Heart left ventricle (tissue), 16 donors: ENCODE measurements at regions of chr13 and their contacts with region 1.

Region 1: GRCh38 chr13:45340422-45340925 is 509 bp downstream of the TPT1 start:
- DNase-seq: peak; percentile 93 to 96 (median 94)
- ATAC-seq: peak; percentile 49 to 76 (median 70)
- H3K4me3 ChIP-seq: peak overlapping the region; percentile 71 to 100 (median 94)
- H3K27ac ChIP-seq: peak overlapping the region; percentile 99 to 100 (median 100)
- H3K4me1 ChIP-seq: peaks cover 16 to 57% (median 49%) of the 10 kb centered on the region in 12 donors
- H3K27me3 ChIP-seq: no peaks in the 10 kb centered on the region
- CTCF ChIP-seq: peak; percentile 27 to 77 (median 58)
- POLR2A ChIP-seq: peak in 1 of 2 donors; percentile 6

Region 2: DNA sequence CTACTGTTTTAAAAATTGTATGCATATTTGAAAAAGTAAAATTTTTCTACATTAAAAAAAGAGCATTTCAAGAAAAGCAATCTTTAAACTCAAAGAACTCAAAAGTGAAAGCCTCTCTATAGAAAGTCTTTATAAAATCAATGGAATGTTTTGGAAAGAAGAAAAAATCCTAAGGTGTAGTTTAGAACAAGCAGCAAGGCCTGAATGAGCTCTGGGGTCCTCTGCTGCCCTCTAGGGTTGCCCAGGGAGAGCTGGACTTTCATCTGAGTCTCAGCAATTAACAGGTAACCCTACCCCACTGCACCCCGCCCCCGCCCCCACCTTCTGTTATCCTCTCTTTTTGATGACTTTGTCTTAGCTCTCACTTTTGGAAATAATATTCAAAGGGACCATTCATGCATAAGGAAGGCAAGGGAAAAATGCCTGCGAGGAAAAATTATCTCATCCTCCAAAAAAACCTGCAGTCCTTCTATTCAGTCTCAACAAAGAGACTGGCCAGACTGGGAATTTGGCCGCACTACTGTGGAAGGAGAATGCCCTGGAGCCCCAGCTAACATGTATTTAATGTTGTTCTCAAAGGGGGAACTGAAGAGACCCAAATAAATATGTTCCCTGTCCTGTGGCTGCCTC is 53.6 kb after region 1 on chr13:
- intact Hi-C with region 1: loop called in 1 of 10 experiments (anchors 10 kb)
- DNase-seq: peak in 3 of 5 donors; percentile 43 to 53 (median 45)
- ATAC-seq: peak in 3 of 4 donors; percentile 43 to 61 (median 53)
- H3K4me3 ChIP-seq: no peak overlapping the region
- H3K27ac ChIP-seq: peak overlapping the region in 1 of 12 donors; percentile 2
- H3K4me1 ChIP-seq: peaks cover 0 to 39% (median 18%) of the 10 kb centered on the region in 12 donors
- H3K27me3 ChIP-seq: no peaks in the 10 kb centered on the region
- CTCF ChIP-seq: peak; percentile 25 to 69 (median 61)
- POLR2A ChIP-seq: no peak